ENCODE measurements at regions of chr12 and their contacts with region 1.

Region 1: DNA sequence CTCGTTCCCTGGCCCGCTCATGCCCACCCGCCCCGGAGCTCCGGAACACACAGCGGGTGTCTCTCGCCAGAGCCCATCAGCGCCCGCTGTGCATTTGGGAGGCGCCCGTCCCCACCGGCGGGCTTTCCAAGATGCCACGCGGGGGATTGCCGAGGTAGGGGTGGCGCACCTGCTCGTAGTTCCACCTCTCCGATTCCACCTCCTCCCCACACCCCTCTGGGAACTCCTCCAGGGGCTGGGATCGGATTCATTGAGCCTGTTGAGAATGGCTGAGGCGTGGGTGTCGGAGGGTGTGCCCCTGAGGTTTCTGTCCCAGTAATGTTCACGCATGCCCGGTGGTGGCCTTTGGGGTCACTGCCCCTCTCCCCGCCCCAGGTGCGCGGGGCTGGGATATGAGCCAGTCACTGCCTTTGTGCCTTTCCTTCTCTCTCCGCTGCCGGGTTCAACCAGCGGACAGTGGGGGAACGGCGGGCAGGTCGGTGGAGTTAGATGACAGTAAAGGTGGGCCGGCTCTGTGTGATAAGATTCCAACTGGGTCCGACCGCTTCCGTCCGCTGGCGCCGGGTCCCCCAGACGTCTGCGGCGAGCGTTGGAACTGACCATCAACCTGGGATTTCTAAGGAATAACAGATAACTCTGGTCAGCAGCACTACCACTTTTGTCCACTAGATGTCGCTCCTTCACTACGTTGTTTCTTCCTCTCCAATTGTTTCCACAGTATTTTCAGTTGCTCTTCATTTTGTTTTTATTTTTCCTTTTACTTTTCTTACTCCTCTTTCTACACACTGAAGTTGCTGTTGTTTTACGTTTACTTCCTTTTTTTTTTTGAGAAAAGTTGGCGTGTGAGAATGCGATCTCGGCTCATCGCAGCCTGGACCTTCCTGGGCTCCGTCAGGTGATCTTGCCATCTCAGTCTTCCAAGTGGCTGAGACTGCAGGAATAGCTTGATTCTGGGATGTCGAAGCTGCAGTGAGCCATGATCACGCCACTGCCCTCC is 178.1 kb upstream of the ALG10B start:
- DNase-seq: peak; percentile 50
- ATAC-seq: peak; percentile 63 to 77

Region 2: GRCh38 chr12:38316391-38317129 is 178.0 kb after region 1 on chr12 and contains the start of gene ALG10B:
- intact Hi-C with region 1: loop called (anchors 2 to 5 kb)
- DNase-seq: peak; percentile 92
- ATAC-seq: peak; percentile 100
- total RNA-seq, gene ALG10B: 6.0 to 8.3 TPM

Measured in left cardiac atrium (tissue), 4 donors.